Heart right ventricle (tissue), 16 donors: ENCODE measurements at regions of chr1 and their contacts with region 1.

Region 1: DNA sequence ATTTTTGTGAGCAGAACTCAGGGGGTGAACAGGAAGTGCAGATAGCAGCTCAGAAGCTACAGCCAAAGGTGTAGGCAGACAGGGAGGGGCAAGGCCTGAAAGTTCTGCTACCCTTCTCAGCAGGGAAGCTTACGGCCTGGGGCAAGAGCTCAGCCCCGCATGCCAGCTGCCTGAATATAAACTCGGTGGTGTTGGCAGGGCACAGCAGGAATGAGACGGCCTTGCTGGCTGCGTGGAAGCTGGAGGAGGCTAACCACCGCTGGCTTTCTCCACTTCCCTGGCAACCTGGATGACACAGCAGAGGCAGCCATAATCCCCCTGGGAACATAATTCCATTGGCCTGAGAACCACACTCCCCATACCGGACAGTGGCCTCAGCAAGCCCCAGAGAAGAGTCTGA is 82.0 kb upstream of the PRRC2C start:
- DNase-seq: no peak
- ATAC-seq: peak in 1 of 8 donors; percentile 17
- H3K4me3 ChIP-seq: no peak overlapping the region
- H3K27ac ChIP-seq: no peak overlapping the region
- H3K4me1 ChIP-seq: peaks cover 0 to 8% (median 0%) of the 10 kb centered on the region in 9 donors
- H3K27me3 ChIP-seq: no peaks in the 10 kb centered on the region
- CTCF ChIP-seq: no peak

Region 2: GRCh38 chr1:171206978-171207355 is 196.4 kb before region 1 on chr1:
- intact Hi-C with region 1: no loop called
- DNase-seq: no peak
- ATAC-seq: peak in 2 of 8 donors; percentile 59 to 66
- H3K4me3 ChIP-seq: no peak overlapping the region
- H3K27ac ChIP-seq: peak overlapping the region in 3 of 10 donors; percentile 7 to 53 (median 32)
- H3K4me1 ChIP-seq: peaks cover 0 to 34% (median 20%) of the 10 kb centered on the region in 9 donors
- H3K27me3 ChIP-seq: no peaks in the 10 kb centered on the region
- CTCF ChIP-seq: no peak

Region 3: DNA sequence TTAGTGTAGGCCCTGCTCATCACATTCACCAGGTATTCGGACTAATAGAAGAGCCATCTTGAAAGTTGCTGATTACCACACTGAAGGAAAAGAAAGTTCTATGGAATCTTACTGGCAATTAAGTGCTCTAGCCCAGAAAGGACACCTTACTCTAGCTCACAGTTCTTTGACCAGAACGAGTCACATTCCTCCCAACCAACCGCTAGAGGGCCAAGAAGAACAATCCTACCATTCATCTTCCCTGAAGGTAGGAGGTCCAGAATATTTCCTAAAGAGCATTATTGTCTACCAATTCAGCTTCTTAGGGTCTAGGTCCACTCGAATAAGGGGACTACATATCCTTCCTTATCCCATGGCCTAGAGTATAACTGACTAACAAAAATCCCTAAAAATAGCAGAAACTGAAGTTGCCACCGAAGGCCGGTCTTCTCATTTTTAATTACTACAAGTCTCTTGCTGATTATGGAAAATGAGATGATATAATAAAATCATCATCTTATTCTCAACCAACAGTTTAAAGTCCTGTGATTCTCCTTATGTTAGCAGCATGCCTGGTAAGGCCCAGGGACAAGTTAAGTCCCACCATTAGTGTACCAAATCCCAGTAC is 157.8 kb before region 1 on chr1:
- intact Hi-C with region 1: loop called in 3 of 10 experiments (anchors 5 to 10 kb)
- DNase-seq: no peak
- ATAC-seq: peak in 6 of 8 donors; percentile 55 to 80 (median 64)
- H3K4me3 ChIP-seq: no peak overlapping the region
- H3K27ac ChIP-seq: no peak overlapping the region
- H3K4me1 ChIP-seq: peaks cover 0 to 7% (median 0%) of the 10 kb centered on the region in 9 donors
- H3K27me3 ChIP-seq: peaks cover 0 to 6% (median 0%) of the 10 kb centered on the region in 7 donors
- CTCF ChIP-seq: peak in 8 of 9 donors; percentile 62 to 78 (median 68)

Region 4: DNA sequence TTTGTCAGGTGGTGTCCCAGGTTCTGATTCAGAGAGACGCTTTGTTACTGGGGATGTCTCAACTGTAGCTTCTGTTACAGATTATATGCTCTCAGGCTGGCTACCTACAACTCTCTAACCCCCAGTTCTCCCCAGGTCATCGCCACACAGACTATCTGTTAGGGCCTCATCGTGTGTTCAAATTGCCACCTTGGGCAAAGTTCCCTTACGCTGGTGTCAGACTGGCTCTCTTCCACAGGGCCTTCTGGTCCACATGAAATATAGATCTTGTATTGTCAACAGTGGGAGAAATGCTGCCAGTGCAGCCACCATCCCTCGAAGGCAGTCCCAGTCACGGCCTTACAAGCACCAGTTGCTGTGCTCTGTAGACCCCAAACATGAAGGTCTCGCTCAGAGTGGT is 74.1 kb before region 1 on chr1:
- intact Hi-C with region 1: loop called in 1 of 10 experiments (anchors 2 kb)
- DNase-seq: no peak
- ATAC-seq: no peak
- H3K4me3 ChIP-seq: no peak overlapping the region
- H3K27ac ChIP-seq: no peak overlapping the region
- H3K4me1 ChIP-seq: no peaks in the 10 kb centered on the region
- H3K27me3 ChIP-seq: no peaks in the 10 kb centered on the region
- CTCF ChIP-seq: no peak

Region 5: DNA sequence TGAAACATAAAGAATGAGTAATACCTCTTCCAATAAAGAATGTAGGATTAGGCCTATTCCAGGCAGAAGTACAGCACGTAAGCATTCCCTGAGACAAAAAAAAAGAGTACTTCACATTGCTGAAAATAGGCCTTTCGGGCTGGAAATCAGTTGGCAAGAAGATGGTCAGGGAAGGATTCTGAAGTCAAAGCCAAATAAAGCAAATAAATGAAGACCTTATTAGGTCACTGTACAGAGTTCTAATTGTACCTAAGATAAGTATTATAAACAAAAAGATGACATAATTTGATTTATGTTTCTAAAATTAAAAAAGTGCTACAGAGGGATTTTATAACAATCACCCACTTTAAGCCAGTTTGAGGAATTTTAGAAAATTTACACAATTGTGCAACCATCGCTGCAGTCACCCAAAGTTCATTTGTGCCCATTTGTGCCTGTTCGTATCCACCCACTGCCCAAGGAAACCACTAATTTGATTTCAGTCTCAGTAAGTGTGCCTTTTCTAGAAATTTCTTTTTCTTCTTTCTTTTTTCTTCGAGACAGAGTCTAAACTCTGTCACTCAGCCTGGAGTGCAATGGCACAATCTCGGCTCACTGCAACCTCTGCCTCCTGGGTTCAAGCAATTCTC is 30.8 kb before region 1 on chr1:
- intact Hi-C with region 1: no loop called
- DNase-seq: no peak
- ATAC-seq: peak in 2 of 8 donors; percentile 26 to 82
- H3K4me3 ChIP-seq: no peak overlapping the region
- H3K27ac ChIP-seq: peak overlapping the region in 2 of 10 donors; percentile 24 to 31
- H3K4me1 ChIP-seq: no peaks in the 10 kb centered on the region
- H3K27me3 ChIP-seq: no peaks in the 10 kb centered on the region
- CTCF ChIP-seq: no peak

Region 6: GRCh38 chr1:171389171-171389570 is 14.2 kb before region 1 on chr1:
- intact Hi-C with region 1: no loop called
- DNase-seq: no peak
- ATAC-seq: no peak
- H3K4me3 ChIP-seq: no peak overlapping the region
- H3K27ac ChIP-seq: no peak overlapping the region
- H3K4me1 ChIP-seq: no peaks in the 10 kb centered on the region
- H3K27me3 ChIP-seq: no peaks in the 10 kb centered on the region
- CTCF ChIP-seq: no peak